ENCODE measurements at regions of chr16 and their contacts with region 1.

Region 1: GRCh38 chr16:689175-689901 is 860 bp downstream of the WDR24 start:
- DNase-seq: no peak
- H3K4me3 Mint-ChIP-seq: peak overlapping the region; percentile 84
- H3K27ac Mint-ChIP-seq: peak overlapping the region; percentile 85
- H3K4me1 Mint-ChIP-seq: peaks cover 37% of the 10 kb centered on the region
- H3K27me3 Mint-ChIP-seq: no peaks in the 10 kb centered on the region

Region 2: GRCh38 chr16:674968-675883 is 14.1 kb before region 1 on chr16 and contains the start of gene RHBDL1:
- CTCF ChIA-PET with region 1: interaction called, 3 read pairs
- POLR2A ChIA-PET with region 1: interaction called, 35 read pairs
- DNase-seq: no peak
- H3K4me3 Mint-ChIP-seq: no peak within 1 kb of the TSS
- H3K27ac Mint-ChIP-seq: no peak within 1 kb of the TSS
- H3K4me1 Mint-ChIP-seq: peaks cover 20% of the 10 kb centered on the region
- H3K27me3 Mint-ChIP-seq: no peaks in the 10 kb centered on the region
- total RNA-seq, gene RHBDL1: 1.5 TPM

Region 3: GRCh38 chr16:700684-701584 is 11.6 kb after region 1 on chr16:
- CTCF ChIA-PET with region 1: no interaction called
- POLR2A ChIA-PET with region 1: interaction called, 21 read pairs
- DNase-seq: peak; percentile 60
- H3K4me3 Mint-ChIP-seq: no peak overlapping the region
- H3K27ac Mint-ChIP-seq: no peak overlapping the region
- H3K4me1 Mint-ChIP-seq: peaks cover 35% of the 10 kb centered on the region
- H3K27me3 Mint-ChIP-seq: peaks cover 31% of the 10 kb centered on the region

Measured in activated CD4-positive, alpha-beta memory T cell treated with anti-CD3 and anti-CD28 coated beads, Interleukin-2, amount 10 ng/mL, durations not matched to agents 7 days and 5 days (primary cell).